Tibial artery (tissue), 4 donors: ENCODE measurements at regions of chr10 and their contacts with region 1.

Region 1: DNA sequence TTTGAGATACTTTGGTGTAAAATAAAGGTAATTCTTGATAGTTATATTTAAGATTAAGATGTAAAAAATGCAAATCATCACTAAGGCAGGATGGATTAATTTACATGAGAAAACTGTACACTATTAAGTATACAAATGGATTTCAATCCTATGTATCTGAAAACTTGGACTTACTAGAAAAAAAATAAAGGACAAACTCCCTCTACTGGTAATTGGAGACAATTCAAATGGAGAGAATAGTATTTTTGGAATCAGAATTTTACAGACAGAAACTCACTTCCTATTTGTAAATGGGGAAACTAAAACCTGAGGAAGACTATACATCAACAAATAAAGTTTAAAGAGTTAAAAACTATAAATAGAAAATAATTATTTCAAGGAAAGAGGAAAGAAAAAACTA is 62.6 kb downstream of the CUL2 start:
- DNase-seq: no peak
- H3K4me3 ChIP-seq: no peak overlapping the region
- H3K27ac ChIP-seq: no peak overlapping the region
- H3K4me1 ChIP-seq: no peaks in the 10 kb centered on the region
- H3K27me3 ChIP-seq: no peaks in the 10 kb centered on the region
- CTCF ChIP-seq: peak; percentile 39 to 41

Region 2: GRCh38 chr10:34666008-34666705 is 361.4 kb before region 1 on chr10:
- intact Hi-C with region 1: loop called (anchors 10 kb)
- DNase-seq: peak in 1 of 2 donors; percentile 46
- H3K4me3 ChIP-seq: no peak overlapping the region
- H3K27ac ChIP-seq: no peak overlapping the region
- H3K4me1 ChIP-seq: no peaks in the 10 kb centered on the region
- H3K27me3 ChIP-seq: no peaks in the 10 kb centered on the region
- CTCF ChIP-seq: peak; percentile 57 to 71

Region 3: GRCh38 chr10:34861293-34862021 is 166.1 kb before region 1 on chr10:
- intact Hi-C with region 1: no loop called
- DNase-seq: peak in 1 of 2 donors; percentile 40
- H3K4me3 ChIP-seq: no peak overlapping the region
- H3K27ac ChIP-seq: no peak overlapping the region
- H3K4me1 ChIP-seq: peaks cover 0 to 20% (median 2%) of the 10 kb centered on the region in 4 donors
- H3K27me3 ChIP-seq: peaks cover 0 to 16% of the 10 kb centered on the region in 2 donors
- CTCF ChIP-seq: no peak

Region 4: DNA sequence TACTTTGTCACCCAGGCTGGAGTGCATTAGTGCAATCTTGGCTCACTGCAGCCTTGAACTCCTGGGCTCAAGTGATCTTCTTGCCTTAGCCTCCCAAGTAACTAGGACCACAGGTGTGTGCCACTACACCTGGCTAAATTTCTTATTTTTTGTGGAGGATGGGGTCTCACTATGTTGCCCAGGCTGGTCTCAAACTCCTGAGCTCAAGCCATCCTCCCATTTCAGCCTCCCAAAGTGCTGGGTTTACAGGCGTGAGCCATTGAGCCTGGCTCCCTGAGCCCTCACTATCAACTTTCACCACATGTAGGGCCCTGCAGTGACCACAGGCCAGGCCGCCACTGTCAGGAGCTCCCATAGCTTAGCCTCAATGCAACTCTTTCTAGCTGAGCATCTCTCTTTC is 47.6 kb before region 1 on chr10:
- intact Hi-C with region 1: no loop called
- DNase-seq: no peak
- H3K4me3 ChIP-seq: no peak overlapping the region
- H3K27ac ChIP-seq: no peak overlapping the region
- H3K4me1 ChIP-seq: no peaks in the 10 kb centered on the region
- H3K27me3 ChIP-seq: no peaks in the 10 kb centered on the region
- CTCF ChIP-seq: no peak

Region 5: DNA sequence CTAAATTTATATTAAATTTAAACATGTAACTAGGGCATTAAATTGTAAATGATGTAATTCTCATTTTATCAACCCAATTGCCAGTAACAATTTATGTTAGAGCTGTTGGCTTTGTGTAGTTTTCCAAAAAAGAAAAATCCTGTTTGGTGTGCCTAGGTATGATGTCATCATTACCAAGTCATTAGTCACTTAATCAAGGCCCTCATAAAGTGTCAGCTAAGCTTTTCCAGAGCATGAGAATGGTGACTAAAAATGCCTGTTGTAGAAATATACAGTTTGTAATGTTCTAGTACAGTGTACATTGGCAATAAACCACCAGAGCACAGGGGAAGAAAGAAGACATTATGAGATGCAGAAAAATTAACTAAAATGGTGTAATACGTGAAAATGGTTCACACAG is 1504.1 kb after region 1 on chr10:
- intact Hi-C with region 1: no loop called
- DNase-seq: no peak
- H3K4me3 ChIP-seq: no peak overlapping the region
- H3K27ac ChIP-seq: no peak overlapping the region
- H3K4me1 ChIP-seq: no peaks in the 10 kb centered on the region
- H3K27me3 ChIP-seq: no peaks in the 10 kb centered on the region
- CTCF ChIP-seq: no peak